ENCODE measurements at regions of chr12 and their contacts with region 1.

Region 1: DNA sequence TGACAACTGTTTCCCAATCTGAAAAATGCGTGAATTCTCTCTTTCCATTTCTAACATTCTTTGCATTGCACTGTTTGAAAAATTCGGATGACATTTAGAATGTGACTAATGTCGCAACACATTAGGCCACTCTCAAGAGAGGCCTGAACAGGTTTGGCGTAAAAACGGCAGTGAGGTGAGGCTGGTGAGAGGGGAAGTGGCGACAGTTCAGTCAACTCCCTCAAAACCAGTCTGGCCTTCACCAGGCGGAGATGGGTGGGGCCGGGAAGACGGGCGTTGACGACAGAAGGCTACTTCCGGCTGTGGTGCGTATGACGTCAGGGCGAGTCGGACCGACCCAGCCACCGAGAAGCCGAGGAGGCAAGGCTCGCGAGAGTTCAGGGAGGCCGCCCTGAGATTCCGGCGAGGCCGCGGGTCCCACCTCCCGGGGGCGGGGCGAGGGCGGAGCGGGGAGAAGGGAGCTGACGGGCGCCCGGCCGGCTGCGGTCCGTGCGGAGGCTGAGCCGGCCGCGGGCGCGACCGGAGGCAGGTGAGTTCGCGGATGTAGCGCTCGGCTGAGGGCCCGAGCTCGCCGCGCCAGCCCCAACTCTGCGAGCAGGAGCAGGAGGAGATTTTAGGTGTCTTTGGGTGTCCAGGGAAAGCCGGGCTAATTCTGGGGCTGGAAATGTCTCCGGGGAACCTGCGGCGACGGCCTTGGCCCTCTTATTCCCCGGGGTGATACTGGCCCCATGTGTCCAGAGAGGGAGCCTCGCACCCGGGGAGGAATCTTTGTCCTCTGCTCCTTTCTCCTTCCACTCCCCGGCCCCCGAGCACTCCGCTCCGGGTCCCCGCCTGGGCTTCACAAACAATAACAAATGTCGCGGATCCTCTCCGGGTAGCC is at the start of gene STK38L:
- DNase-seq: peak; percentile 99
- H3K4me3 Mint-ChIP-seq: peak within 1 kb of the TSS; percentile 96
- H3K27ac Mint-ChIP-seq: peak within 1 kb of the TSS; percentile 98
- H3K4me1 Mint-ChIP-seq: peaks cover 31% of the 10 kb centered on the region
- H3K27me3 Mint-ChIP-seq: no peaks in the 10 kb centered on the region
- total RNA-seq, gene STK38L: 22.8 and 23.0 TPM in 2 replicates

Region 2: GRCh38 chr12:26832822-26833742 is 411.0 kb before region 1 on chr12 and contains the start of gene ITPR2:
- intact Hi-C with region 1: loop called (anchors 5 kb)
- DNase-seq: peak; percentile 97
- H3K4me3 Mint-ChIP-seq: peak within 1 kb of the TSS; percentile 100
- H3K27ac Mint-ChIP-seq: peak within 1 kb of the TSS; percentile 99
- H3K4me1 Mint-ChIP-seq: peaks cover 41% of the 10 kb centered on the region
- H3K27me3 Mint-ChIP-seq: no peaks in the 10 kb centered on the region
- total RNA-seq, gene ITPR2: 46.0 and 46.2 TPM in 2 replicates

Region 3: DNA sequence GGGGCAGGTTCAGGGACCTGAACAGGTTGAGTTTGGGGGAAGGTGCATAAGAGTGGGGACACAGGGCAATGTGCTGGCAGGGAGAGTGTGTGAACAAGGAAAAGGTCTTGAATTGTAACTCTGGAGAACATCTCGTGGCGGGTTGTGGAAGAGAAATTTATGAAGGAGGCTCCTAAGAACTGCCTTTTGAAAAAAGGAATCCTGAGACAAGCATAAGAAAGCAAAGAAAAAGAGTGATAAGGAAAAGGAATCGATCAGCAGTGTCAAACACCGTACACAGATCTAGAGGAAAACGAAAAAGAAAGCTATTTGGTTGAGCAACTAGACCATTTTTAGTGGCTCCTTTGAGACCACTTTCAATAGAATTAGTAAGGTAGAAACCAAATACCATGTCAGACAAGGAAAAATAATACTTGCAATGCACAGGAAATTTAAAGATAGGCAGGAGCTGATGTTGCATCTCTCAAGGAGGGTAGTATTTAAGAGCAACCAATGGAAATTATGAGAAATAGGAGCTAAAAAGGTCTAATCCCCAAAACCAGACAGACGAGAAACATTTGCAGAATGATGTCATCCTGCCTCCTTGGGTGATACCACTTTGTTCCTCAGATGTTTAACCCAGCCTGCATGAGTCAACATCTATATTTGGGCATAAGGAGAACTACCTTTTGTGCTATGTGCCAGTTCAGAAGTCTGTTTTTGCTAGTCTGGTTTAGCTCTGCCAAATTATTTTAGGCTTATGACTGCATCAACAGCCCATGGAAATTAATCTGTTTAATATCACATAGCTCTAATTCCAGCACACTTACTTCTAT is 64.4 kb before region 1 on chr12:
- intact Hi-C with region 1: loop called (anchors 1 kb)
- DNase-seq: peak; percentile 80
- H3K4me3 Mint-ChIP-seq: peak overlapping the region; percentile 61
- H3K27ac Mint-ChIP-seq: peak overlapping the region; percentile 87
- H3K4me1 Mint-ChIP-seq: peaks cover 39% of the 10 kb centered on the region
- H3K27me3 Mint-ChIP-seq: no peaks in the 10 kb centered on the region

Region 4: GRCh38 chr12:27220057-27220987 is 23.7 kb before region 1 on chr12:
- intact Hi-C with region 1: loop called (anchors 2 kb)
- DNase-seq: no peak
- H3K4me3 Mint-ChIP-seq: peak overlapping the region; percentile 1
- H3K27ac Mint-ChIP-seq: peak overlapping the region; percentile 49
- H3K4me1 Mint-ChIP-seq: peaks cover 11% of the 10 kb centered on the region
- H3K27me3 Mint-ChIP-seq: peaks cover 5% of the 10 kb centered on the region

Region 5: DNA sequence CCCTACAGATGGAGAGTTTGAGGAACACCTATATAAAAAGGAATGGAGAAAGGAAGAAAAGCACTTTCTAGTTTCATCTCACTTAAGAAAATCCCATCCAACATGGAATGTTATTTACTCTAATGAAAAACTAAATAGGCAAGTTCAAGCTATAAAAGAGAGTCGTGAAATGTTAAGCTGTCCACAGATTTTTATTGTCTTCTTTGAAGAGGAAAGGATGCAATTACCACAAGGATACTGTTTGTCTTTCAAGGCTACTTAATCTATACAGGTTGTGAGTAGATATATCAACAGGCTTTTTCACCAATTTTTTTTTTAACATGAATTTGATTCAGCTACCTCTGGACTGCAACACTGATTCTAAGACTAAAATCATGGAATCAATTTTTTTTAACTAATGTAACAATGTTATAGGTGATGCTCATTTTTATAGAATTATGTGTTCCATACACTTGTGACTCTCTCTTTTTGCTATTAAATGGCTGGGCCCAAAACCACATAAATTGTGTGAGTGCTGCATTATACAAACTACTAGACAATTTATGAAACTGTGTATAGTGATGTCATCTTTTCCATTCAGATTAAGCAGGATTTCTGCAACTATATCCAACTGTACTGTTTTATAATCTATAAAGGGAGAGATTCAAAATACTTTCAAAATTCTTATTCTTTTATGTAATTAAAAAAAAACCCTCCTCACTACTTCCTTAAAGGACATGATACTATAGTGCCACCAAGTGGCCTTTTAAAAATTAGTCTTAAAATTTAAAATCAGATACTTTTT is 61.8 kb after region 1 on chr12:
- intact Hi-C with region 1: loop called (anchors 5 kb)
- DNase-seq: no peak
- H3K4me3 Mint-ChIP-seq: no peak overlapping the region
- H3K27ac Mint-ChIP-seq: no peak overlapping the region
- H3K4me1 Mint-ChIP-seq: peaks cover 11% of the 10 kb centered on the region
- H3K27me3 Mint-ChIP-seq: no peaks in the 10 kb centered on the region

Measured in activated CD4-positive, alpha-beta T cell treated with anti-CD3 and anti-CD28 coated beads, Interleukin-2, amount 10 ng/mL, durations not matched to agents 24 days and 14 days (primary cell).